Calu3 (cell line): ENCODE measurements at regions of chrX and their contacts with region 1.

Region 1: GRCh38 chrX:38803586-38804431 is 2.5 kb downstream of the MID1IP1 start:
- DNase-seq: peak; percentile 93
- H3K4me3 Mint-ChIP-seq: peak overlapping the region; percentile 97
- H3K27ac Mint-ChIP-seq: peak overlapping the region; percentile 99
- H3K4me1 Mint-ChIP-seq: peaks cover 9% of the 10 kb centered on the region
- H3K27me3 Mint-ChIP-seq: no peaks in the 10 kb centered on the region
- CTCF ChIP-seq: no peak

Region 2: GRCh38 chrX:38868941-38869401 is 65.2 kb after region 1 on chrX:
- CTCF ChIA-PET with region 1: no interaction called
- intact Hi-C with region 1: loop called (anchors 5 kb)
- DNase-seq: peak; percentile 3
- H3K4me3 Mint-ChIP-seq: no peak overlapping the region
- H3K27ac Mint-ChIP-seq: no peak overlapping the region
- H3K4me1 Mint-ChIP-seq: peaks cover 41% of the 10 kb centered on the region
- H3K27me3 Mint-ChIP-seq: no peaks in the 10 kb centered on the region
- CTCF ChIP-seq: no peak

Region 3: DNA sequence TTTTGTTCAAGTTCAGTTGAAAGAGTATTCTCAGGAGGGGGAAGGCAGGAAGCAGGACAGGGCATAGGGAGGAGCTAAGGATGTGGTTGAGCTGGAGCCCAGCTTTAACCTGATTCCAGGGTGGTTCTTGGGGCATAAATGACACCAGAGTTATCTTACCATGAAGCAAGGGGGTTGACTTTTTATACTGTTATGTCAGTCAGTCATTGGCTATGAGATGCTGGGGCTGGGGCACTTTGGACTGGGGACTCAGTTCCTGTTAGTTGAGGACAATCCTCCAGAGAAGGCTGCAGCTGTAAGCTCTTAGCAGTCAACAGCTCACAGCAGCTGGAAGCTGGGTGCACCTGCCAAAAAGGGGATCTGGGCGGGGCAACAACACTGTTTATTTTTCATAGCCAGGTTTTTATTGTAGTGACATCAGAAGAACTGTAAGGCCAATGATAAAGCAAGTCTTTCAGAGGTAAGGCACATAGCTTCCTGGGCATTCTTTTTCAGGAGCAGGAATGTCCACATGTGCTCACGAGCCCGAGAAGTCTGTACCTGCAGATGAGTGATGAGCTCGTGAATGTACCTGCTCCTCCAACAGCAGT is 75.9 kb after region 1 on chrX:
- CTCF ChIA-PET with region 1: interaction called, 7 read pairs
- intact Hi-C with region 1: loop called (anchors 5 kb)
- DNase-seq: peak; percentile 8
- H3K4me3 Mint-ChIP-seq: peak overlapping the region; percentile 51
- H3K27ac Mint-ChIP-seq: peak overlapping the region; percentile 85
- H3K4me1 Mint-ChIP-seq: peaks cover 20% of the 10 kb centered on the region
- H3K27me3 Mint-ChIP-seq: no peaks in the 10 kb centered on the region
- CTCF ChIP-seq: no peak

Region 4: GRCh38 chrX:38985375-38985774 is 181.6 kb after region 1 on chrX:
- CTCF ChIA-PET with region 1: interaction called, 3 read pairs
- intact Hi-C with region 1: loop called (anchors 2 kb)
- DNase-seq: no peak
- H3K4me3 Mint-ChIP-seq: no peak overlapping the region
- H3K27ac Mint-ChIP-seq: no peak overlapping the region
- H3K4me1 Mint-ChIP-seq: peaks cover 44% of the 10 kb centered on the region
- H3K27me3 Mint-ChIP-seq: no peaks in the 10 kb centered on the region
- CTCF ChIP-seq: no peak

Region 5: GRCh38 chrX:39012621-39013111 is 208.9 kb after region 1 on chrX:
- CTCF ChIA-PET with region 1: interaction called, 6 read pairs
- intact Hi-C with region 1: loop called (anchors 2 kb)
- DNase-seq: no peak
- H3K4me3 Mint-ChIP-seq: no peak overlapping the region
- H3K27ac Mint-ChIP-seq: no peak overlapping the region
- H3K4me1 Mint-ChIP-seq: peaks cover 69% of the 10 kb centered on the region
- H3K27me3 Mint-ChIP-seq: no peaks in the 10 kb centered on the region
- CTCF ChIP-seq: no peak